HEK293 (cell line): ENCODE measurements at regions of chr17 and their contacts with region 1.

Region 1: DNA sequence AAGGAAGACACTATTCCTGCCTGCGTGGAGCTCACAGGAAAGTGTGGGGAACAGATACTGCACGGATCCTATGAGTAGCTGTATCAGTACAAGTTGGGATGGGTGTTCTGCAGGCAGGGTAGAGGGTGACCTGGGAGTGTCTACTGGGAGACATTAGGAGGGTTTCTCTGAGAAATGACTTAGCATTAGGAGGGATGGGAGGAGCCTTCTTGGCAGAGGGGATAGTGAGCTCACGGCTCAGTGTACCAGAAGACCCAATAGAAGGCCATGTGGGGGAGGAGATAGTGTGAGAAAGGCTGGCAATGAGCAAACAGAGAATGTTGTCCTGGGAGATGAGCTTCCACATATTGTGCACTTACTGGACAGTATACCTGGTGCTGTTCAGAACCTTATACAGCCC is 109.1 kb downstream of the MSI2 start:
- H3K4me3 ChIP-seq: no peak overlapping the region
- H3K27ac ChIP-seq: no peak overlapping the region
- H3K4me1 ChIP-seq: peaks cover 20% of the 10 kb centered on the region
- CTCF ChIP-seq: no peak

Region 2: DNA sequence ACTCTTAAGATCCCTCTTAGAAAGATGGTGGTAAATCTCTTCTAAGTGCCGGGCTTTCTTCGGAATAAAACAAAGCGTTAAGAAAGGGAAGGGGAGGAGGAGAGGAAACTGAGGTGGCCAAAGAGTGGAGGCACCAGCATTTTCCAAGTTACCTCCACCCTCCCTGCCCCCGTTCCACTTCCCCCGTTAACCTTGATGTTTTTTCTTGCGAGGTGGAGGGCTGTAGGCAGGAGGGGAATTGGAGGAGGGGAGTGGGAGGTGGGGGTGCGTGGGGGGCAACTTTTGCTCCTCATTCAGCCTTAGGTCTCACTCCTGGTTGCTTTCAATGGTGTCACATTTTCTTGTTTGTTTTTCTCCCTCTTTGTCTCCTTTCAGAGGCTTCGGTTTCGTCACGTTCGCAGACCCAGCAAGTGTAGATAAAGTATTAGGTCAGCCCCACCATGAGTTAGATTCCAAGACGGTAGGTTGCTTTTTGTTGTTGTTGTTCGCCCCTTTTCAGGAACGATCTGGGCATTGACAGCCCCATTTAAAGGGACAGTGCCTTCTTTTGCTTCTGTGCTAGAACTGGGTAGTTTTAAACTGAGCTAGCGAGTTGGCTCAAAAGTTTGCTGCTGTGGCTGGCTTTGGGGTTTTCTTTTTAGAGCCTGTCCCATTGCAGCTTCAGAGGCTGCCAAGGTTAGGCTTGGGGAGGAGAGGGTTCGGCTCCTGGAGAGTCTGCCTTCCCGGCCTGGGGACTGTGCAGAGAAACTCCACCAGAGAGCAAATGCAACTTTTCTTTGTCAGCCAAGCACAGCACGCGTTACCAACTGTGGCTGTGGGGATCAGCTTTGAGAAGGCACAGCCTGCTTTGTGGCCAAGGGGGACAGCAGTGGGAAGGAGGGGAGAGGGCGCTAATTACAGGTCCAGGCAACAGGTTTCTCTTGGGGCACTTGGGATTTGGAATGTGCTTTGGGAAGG is 107.2 kb before region 1 on chr17:
- CTCF ChIA-PET with region 1: no interaction called
- POLR2A ChIA-PET with region 1: no interaction called
- H3K4me3 ChIP-seq: peak overlapping the region; percentile 71
- H3K27ac ChIP-seq: peak overlapping the region; percentile 49; the same call in 1 of the 2 replicates
- H3K4me1 ChIP-seq: peaks cover 11% of the 10 kb centered on the region; the same call in 1 of the 2 replicates
- CTCF ChIP-seq: no peak

Region 3: DNA sequence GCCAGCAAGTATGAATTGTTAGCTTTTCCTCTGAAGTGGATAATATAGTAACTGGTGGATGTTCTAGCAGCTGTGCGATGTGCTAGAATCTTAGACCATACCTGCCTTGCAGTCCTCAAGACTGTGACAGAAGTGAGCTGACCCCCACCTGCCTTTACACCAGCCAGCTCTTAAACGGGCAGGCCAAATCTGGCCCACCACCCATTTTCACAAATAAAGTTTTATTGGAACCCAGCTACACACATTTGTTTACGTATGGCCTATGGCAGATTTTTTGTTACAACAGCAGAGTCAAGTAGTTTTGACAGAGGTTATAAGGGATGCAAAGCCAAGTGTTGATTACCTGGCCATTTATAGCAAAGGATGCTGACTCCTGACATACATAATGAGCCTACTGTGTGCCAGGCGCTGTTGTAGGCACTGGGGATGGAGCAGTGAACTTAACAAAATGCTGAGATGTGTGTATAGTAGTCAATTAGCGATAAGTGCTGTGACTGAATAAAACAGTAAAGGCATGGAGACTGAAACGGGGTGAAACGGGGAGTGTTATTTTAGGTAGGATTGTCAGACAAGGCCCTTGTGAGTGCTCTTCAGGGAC is 30.1 kb before region 1 on chr17:
- CTCF ChIA-PET with region 1: no interaction called
- POLR2A ChIA-PET with region 1: interaction called, 12 read pairs
- H3K4me3 ChIP-seq: no peak overlapping the region
- H3K27ac ChIP-seq: no peak overlapping the region
- H3K4me1 ChIP-seq: no peaks in the 10 kb centered on the region
- CTCF ChIP-seq: no peak